PC-3 (cell line): ENCODE measurements at regions of chr14 and their contacts with region 1.

Region 1: GRCh38 chr14:60248697-60249318 is at the start of gene PPM1A:
- DNase-seq: peak; percentile 100
- ATAC-seq: peak; percentile 70
- H3K4me3 ChIP-seq: peak within 1 kb of the TSS; percentile 69
- H3K27ac ChIP-seq: peak within 1 kb of the TSS; percentile 87
- H3K4me1 ChIP-seq: peaks cover 30% of the 10 kb centered on the region
- H3K27me3 ChIP-seq: no peaks in the 10 kb centered on the region
- CTCF ChIP-seq: no peak
- total RNA-seq, gene PPM1A: 69.3 and 69.4 TPM in 2 replicates

Region 2: DNA sequence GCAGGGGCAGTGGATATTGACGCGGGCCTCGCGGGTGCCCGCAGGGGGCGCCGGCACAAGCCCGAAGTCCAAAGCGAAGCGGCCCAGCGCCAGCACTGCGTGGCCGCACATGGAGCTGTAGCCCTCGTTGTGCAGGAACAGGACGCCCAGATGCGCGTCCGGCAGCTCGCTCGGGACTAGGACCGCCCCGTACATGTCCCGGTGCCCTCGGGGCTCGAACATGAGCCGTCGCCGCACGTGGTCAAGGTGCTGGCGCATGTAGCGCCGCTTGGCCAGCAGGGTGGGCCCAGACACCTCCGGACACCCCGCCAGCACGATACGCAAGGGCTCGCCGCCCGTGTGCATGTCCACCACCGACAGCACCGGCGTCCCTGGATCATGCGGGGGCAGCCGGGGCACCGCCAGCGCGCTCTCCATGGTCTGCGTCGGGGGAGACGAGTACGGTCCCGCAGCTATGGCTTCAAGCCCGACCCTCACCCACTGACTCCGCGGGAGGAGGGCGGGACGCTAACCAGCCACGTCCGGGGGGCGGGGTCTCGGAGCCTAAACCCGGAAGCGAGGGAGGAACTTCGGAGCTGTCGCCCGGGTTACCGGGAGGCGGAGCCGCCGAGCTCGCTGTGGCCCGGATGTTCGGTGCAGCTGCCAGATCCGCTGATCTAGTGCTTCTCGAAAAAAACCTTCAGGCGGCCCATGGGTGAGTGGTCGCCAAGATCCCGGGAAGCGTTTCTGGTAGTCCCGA is 764.7 kb before region 1 on chr14 and contains the starts of genes JKAMP and L3HYPDH:
- CTCF ChIA-PET with region 1: no interaction called
- POLR2A ChIA-PET with region 1: no interaction called
- intact Hi-C with region 1: loop called (anchors 5 kb)
- DNase-seq: peak; percentile 100
- ATAC-seq: peak; percentile 75
- H3K4me3 ChIP-seq: peak within 1 kb of the TSS; percentile 79
- H3K27ac ChIP-seq: peak within 1 kb of the TSS; percentile 83
- H3K4me1 ChIP-seq: peaks cover 42% of the 10 kb centered on the region
- H3K27me3 ChIP-seq: no peaks in the 10 kb centered on the region
- CTCF ChIP-seq: peak; percentile 92
- total RNA-seq, gene JKAMP: 130 and 147 TPM in 2 replicates
- total RNA-seq, gene L3HYPDH: 108 and 117 TPM in 2 replicates

Region 3: DNA sequence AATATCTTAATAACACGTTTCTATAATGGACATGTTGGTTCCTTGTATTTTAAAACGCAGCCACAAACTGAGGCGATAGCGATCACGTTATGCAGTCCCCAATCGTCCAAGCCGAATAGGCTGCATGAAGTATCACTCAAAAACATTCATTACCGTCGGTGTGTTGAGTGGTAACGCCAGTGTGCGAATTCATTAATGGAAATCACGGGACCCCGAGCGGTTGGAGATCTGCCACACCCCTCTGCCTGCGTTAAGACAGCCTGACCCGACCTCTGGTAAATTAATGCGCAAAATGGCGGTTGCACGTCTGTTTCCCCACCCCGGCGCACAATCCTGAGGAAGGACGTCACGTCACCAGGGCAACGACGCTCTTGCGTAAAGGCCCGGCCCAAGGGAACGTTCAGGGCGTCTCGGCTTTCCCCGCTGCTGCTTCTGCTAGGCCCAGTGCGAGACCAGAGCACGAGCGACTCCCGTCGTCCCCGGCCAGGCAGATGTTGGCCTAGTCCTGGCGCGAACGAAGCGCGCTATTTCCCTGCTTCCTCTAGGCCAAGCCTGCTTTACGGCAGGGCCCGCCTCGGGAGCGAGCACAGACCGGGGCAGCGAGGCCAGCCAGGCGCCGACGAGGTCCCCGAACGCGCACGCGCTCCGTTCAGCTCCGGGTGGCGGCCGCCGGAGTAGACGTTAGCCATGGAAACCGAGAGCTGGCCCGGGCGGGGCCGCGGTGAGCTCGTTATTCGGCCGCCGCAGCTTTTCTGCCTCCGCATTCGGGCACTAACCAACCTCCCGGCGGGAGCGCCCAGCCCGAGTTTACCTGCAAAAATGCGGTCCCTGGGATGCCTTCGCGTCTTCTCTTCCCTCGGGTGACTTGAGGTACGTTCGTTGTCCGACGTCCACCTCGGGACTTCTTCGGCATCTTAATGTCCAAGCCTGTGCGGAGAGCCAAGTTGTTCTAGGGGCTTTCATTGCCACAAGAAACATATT is 157.0 kb before region 1 on chr14 and contains the start of gene PCNX4:
- CTCF ChIA-PET with region 1: no interaction called
- POLR2A ChIA-PET with region 1: interaction called, 23 read pairs
- intact Hi-C with region 1: loop called (anchors 1 kb)
- DNase-seq: peak; percentile 100
- ATAC-seq: peak; percentile 93
- H3K4me3 ChIP-seq: peak within 1 kb of the TSS; percentile 76
- H3K27ac ChIP-seq: peak within 1 kb of the TSS; percentile 85
- H3K4me1 ChIP-seq: peaks cover 42% of the 10 kb centered on the region
- H3K27me3 ChIP-seq: no peaks in the 10 kb centered on the region
- CTCF ChIP-seq: no peak
- total RNA-seq, gene PCNX4: 117 and 151 TPM in 2 replicates

Region 4: DNA sequence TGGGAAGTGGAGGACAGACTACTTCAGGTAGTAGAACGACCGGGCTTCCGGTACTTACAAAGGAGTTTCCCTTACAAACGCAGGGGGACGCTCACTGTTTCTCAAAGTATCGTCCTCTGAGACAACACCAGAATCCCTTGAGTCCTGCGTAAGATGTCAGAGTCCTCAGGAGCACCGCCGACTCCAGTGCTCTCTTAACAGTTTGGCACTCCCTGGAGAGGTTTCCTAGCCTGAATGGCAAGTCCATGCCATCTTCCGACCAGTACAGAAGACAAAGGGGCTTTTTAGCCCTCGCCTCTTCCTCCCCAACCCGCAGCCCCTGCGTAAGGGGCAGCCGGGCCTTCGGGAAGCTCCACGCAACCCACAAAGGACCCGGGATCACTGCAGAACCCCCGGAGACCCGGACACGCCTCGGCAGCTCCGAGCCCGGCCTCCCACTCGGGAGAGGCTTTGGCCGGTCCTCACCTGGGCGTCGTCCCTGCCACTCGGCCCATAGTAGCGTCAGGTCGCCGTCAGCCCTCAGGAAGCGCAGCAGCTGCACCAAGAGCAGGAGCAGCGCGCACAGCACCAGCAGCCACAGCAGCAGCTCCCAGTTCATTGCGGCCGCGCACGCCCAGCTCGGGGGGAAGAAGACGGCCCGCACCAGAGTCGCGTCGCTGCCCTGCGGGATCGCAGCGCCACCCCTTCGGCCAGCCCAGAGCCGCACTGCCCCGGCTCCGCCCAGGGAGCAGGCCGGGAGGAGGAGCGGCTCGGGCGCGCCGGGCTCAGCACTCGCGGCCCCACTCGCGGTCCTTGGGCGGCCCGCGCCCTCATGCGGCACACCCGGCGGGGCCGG is 83.9 kb before region 1 on chr14 and contains the start of gene DHRS7:
- CTCF ChIA-PET with region 1: interaction called, 5 read pairs
- POLR2A ChIA-PET with region 1: interaction called, 4 read pairs
- intact Hi-C with region 1: loop called (anchors 1 kb)
- DNase-seq: peak; percentile 99
- ATAC-seq: peak; percentile 95
- H3K4me3 ChIP-seq: peak within 1 kb of the TSS; percentile 75
- H3K27ac ChIP-seq: peak within 1 kb of the TSS; percentile 61
- H3K4me1 ChIP-seq: peaks cover 34% of the 10 kb centered on the region
- H3K27me3 ChIP-seq: no peaks in the 10 kb centered on the region
- CTCF ChIP-seq: peak; percentile 85
- total RNA-seq, gene DHRS7: 236 and 266 TPM in 2 replicates

Region 5: DNA sequence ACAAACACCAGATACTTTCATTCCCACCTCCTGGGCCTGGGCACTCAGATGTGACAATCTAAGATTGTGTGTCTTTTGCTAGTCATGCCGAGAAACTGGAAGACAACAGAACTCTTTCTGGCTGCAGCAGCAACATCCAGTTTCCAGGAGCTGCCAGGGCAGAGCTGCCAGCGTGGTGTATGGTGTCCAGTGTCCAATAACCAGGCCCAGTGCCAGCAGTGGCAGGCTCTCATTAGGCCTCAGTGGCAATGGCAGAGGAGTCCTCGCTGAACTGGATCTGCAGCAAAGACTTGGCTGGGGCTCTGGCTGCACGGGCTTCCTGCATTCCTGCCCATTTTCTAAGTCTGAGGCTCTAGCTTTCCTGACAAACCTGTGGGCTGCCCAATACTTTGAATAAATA is 26.0 kb before region 1 on chr14:
- CTCF ChIA-PET with region 1: no interaction called
- POLR2A ChIA-PET with region 1: no interaction called
- intact Hi-C with region 1: loop called (anchors 2 kb)
- DNase-seq: peak; percentile 96
- ATAC-seq: peak; percentile 91
- H3K4me3 ChIP-seq: no peak overlapping the region
- H3K27ac ChIP-seq: no peak overlapping the region
- H3K4me1 ChIP-seq: peaks cover 9% of the 10 kb centered on the region
- H3K27me3 ChIP-seq: no peaks in the 10 kb centered on the region
- CTCF ChIP-seq: no peak

Region 6: GRCh38 chr14:60278350-60278749 is 29.5 kb after region 1 on chr14:
- CTCF ChIA-PET with region 1: no interaction called
- POLR2A ChIA-PET with region 1: interaction called, 17 read pairs
- intact Hi-C with region 1: no loop called
- DNase-seq: no peak
- ATAC-seq: no peak
- H3K4me3 ChIP-seq: no peak overlapping the region
- H3K27ac ChIP-seq: no peak overlapping the region
- H3K4me1 ChIP-seq: peaks cover 8% of the 10 kb centered on the region; the same call in 1 of the 2 replicates
- H3K27me3 ChIP-seq: no peaks in the 10 kb centered on the region
- CTCF ChIP-seq: no peak

Region 7: DNA sequence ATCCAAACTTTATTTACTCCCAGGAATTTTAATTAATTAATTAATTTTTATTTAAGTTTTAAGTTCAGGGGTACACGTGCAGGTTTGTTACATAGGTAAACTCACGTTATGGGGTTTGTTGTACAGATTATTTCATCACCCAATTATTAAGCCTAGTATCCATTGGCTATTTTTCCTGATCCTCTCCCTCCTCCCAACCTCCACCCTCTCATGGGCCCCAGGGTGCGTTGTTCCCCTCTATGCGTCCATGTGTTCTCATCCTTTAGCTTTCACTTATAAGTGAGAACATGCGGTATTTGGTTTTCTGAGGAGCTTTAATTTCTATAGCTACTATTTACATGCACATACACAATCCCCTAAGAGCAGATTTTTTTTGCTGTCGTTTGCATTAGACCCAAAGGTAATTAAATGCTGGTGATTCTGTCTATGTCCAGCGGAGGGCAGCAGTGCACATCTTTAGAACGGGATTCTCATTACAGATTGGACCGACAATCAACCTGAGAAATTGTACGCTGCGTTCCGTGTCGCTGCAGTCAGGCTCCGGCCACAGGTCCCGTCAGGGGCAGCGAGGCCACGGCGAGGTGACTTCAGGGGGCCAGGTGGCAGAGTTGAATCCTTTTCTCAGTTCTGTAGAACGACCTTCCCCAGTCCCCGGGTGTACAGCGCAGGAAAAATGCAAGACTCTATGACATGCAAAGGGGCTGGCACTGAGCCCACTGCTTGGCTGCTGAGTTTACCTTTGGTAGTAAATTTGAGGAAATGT is 1020.7 kb after region 1 on chr14:
- CTCF ChIA-PET with region 1: no interaction called
- POLR2A ChIA-PET with region 1: no interaction called
- intact Hi-C with region 1: loop called (anchors 10 kb)
- DNase-seq: peak; percentile 98
- ATAC-seq: peak; percentile 71
- H3K4me3 ChIP-seq: peak overlapping the region; percentile 65
- H3K27ac ChIP-seq: no peak overlapping the region
- H3K4me1 ChIP-seq: peaks cover 6% of the 10 kb centered on the region
- H3K27me3 ChIP-seq: no peaks in the 10 kb centered on the region
- CTCF ChIP-seq: peak; percentile 97